IMR-90 (cell line): ENCODE measurements at regions of chr12 and their contacts with region 1.

Region 1: DNA sequence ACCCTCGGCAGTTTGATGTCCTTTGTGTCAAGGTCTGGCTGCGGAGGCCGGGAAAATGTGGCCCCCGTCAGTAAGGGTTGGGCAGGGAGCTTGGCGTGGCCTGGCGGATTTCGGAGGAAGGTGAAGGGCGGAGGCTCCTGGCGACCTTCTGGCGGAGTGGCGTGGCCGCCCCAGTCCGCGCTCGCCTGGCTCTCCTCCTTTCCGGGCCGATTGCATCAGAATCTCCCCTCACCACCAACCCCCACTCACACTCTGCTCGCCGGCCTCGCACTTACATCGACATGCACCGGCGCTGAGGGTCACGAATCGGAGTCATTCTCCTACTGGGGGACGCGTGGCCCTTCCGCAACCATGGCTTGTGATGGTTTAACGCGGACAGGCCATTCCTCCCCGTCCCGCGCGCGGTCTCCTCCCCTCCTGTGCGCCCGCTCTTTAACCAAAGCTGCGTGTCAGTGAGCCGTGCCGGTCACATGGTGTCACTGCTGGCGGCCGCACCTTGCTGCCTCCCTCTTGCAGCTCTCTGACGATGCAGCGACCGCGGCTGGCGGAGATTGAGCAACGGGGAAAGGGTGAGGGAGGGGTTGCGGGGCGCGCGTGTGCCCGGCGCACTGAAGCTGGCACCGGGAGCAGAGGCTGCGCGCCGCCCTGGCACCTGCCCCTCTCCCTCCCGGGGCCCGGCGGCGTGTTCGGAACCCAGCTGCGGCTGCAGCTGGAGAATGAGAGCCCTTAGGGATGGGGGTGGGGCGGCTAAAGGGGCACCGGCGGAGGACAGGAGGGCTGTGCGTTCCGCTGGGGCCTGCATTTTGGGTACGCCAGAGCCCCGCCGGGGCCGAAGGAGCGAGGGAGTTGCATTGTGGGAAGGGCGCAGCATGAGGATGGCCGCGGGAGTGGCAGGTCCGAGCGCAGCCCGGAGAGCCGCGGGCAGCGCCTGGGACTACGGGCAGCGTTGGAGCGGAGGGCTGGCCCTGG is at the start of gene SLC38A1:
- DNase-seq: peak; percentile 74
- ATAC-seq: peak; percentile 70
- H3K4me3 ChIP-seq: peak within 1 kb of the TSS; percentile 96
- H3K27ac ChIP-seq: peak within 1 kb of the TSS; percentile 91
- H3K4me1 ChIP-seq: peaks cover 15% of the 10 kb centered on the region
- H3K27me3 ChIP-seq: no peaks in the 10 kb centered on the region
- CTCF ChIP-seq: no peak
- POLR2A ChIP-seq: peak; percentile 63; the same call in 1 of the 2 replicates
- RAD21 ChIP-seq: no peak; the same call in 1 of the 2 replicates
- total RNA-seq, gene SLC38A1: 61.5 and 71.9 TPM in 2 replicates

Region 2: DNA sequence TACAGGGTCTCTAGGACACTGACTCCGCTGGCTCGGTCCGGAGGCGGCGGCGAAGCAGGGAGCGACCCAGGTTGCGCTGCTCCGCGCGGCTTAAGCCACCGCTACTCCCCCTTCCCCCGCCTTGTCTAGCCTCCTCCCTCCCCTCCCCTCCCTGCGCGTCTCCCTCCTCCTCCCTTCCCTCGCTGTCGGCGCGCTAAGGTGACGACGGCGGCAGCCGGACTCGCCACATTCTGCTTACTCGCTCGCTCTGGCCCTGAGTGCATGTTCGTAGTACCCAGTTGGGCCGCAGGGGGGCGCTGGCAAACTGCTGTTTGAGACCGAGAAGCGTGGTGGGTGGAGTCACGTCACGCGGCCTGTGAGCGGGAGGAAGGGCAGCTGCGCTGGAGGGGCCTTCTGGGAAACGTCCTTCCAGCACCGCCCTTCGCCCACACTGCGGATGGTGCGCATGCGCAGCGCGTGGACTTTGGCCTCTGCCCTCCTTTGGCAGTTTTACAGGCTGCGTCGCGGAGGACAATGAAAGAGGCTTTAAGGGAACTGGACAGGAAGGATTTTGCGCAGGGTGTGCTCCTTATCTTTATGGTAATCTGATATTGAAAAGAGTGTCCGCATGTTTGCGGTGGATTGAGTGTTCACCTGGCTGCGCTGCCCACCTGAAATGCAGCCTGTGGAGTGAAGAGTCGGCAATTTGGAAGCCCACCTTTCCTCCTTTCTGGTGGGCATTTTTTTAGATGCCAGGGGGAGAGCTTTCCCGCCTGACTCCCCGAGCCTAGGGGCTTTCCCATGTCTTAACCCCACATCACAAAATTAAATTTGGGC is 278.2 kb before region 1 on chr12 and contains the start of gene SCAF11:
- CTCF ChIA-PET with region 1: no interaction called
- POLR2A ChIA-PET with region 1: no interaction called
- dilution Hi-C with region 1: no loop called
- in situ Hi-C with region 1: no loop called
- intact Hi-C with region 1: loop called (anchors 5 kb)
- DNase-seq: peak; percentile 100
- ATAC-seq: peak; percentile 86
- H3K4me3 ChIP-seq: peak within 1 kb of the TSS; percentile 78
- H3K27ac ChIP-seq: peak within 1 kb of the TSS; percentile 87
- H3K4me1 ChIP-seq: peaks cover 3% of the 10 kb centered on the region; the same call in 1 of the 2 replicates
- H3K27me3 ChIP-seq: no peaks in the 10 kb centered on the region
- CTCF ChIP-seq: peak; percentile 99
- POLR2A ChIP-seq: peak; percentile 86
- RAD21 ChIP-seq: peak; percentile 84
- total RNA-seq, gene SCAF11: 70.4 and 90.3 TPM in 2 replicates

Region 3: DNA sequence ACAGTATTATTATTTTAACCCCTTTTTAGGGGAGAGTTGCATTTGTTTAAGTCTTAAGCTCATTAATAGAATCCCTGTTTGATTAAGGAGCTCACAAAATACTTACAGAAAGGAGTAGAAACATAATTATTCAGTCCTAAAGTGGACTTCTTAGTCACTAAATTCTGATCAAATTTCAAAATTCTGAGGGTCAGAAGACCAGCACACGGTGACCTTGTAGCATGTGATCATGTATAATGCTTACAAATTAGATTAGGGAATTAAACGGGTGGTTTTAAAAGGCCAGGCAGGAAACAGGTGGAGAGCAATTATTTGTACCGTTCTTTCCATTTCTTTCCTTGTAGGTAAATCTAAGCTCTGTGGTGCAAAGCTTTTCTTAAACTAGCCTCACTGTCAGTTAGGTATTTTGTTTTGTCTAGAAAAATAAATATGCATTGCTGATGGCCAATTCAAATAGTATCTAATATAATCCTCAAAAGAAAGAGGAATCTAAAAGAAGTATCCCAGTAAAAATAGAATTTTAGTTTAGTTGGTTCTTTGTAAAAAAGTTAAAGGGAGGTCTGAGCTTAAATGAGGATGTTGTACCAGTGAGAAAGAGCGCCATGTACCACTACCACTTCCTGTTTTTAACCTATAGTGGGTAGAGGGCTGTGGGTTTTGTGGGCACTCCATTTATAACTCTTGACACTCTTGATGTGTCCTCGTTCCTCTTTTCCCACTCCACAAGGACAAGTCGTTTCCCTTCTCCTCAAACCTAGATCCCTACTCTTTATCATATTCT is 51.1 kb before region 1 on chr12:
- CTCF ChIA-PET with region 1: no interaction called
- POLR2A ChIA-PET with region 1: no interaction called
- dilution Hi-C with region 1: no loop called
- in situ Hi-C with region 1: loop called (anchors 5 kb)
- intact Hi-C with region 1: loop called (anchors 5 kb)
- DNase-seq: no peak
- ATAC-seq: no peak
- H3K4me3 ChIP-seq: no peak overlapping the region
- H3K27ac ChIP-seq: no peak overlapping the region
- H3K4me1 ChIP-seq: peaks cover 10% of the 10 kb centered on the region
- H3K27me3 ChIP-seq: no peaks in the 10 kb centered on the region
- CTCF ChIP-seq: no peak
- POLR2A ChIP-seq: no peak
- RAD21 ChIP-seq: no peak

Region 4: GRCh38 chr12:46342562-46343033 is 73.7 kb after region 1 on chr12:
- CTCF ChIA-PET with region 1: no interaction called
- POLR2A ChIA-PET with region 1: no interaction called
- dilution Hi-C with region 1: no loop called
- in situ Hi-C with region 1: no loop called
- intact Hi-C with region 1: no loop called
- DNase-seq: peak; percentile 63
- ATAC-seq: peak; percentile 91
- H3K4me3 ChIP-seq: no peak overlapping the region
- H3K27ac ChIP-seq: no peak overlapping the region
- H3K4me1 ChIP-seq: peaks cover 3% of the 10 kb centered on the region; the same call in 1 of the 2 replicates
- H3K27me3 ChIP-seq: no peaks in the 10 kb centered on the region
- CTCF ChIP-seq: peak; percentile 53
- POLR2A ChIP-seq: no peak
- RAD21 ChIP-seq: peak; percentile 63

Region 5: GRCh38 chr12:46492471-46493351 is 223.8 kb after region 1 on chr12:
- CTCF ChIA-PET with region 1: no interaction called
- POLR2A ChIA-PET with region 1: no interaction called
- dilution Hi-C with region 1: no loop called
- in situ Hi-C with region 1: no loop called
- intact Hi-C with region 1: loop called (anchors 10 kb)
- DNase-seq: peak; percentile 97
- ATAC-seq: peak; percentile 65
- H3K4me3 ChIP-seq: no peak overlapping the region
- H3K27ac ChIP-seq: peak overlapping the region; percentile 93; the same call in 1 of the 2 replicates
- H3K4me1 ChIP-seq: peaks cover 27% of the 10 kb centered on the region
- H3K27me3 ChIP-seq: no peaks in the 10 kb centered on the region
- CTCF ChIP-seq: no peak
- POLR2A ChIP-seq: no peak
- RAD21 ChIP-seq: no peak

Region 6: DNA sequence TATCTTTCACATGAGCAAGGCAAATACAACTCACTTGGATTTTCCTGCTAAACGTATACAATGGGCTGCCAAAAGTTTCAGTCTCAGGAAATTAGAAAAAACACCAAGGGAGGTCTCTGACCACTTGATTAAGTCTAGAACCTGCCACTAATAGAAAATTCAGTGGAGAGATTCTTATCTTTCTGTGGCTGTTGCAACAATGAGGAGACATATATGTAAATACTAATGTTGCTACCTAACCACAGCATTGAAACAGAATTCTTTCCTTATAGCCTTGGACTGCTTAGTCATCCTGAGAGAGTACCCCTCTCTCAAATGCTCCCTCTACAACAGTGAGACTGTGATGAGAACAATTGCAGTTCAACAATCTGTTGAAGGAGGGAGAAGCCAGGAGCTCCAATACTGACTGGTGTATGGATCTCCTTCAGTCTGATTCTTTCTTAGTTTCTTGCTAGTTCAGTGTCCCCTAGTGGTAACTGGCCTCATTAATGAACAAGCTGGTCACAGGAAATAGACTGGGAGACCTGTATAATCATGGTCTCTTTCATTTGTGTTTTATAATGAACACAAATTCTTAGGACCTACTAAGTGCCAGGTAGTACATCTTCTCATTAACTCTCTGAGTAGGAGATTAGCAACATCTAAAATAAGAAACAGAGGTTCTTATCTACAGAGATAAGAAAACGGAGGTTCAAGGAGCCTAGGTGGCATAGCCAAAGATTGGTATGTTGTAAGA is 392.4 kb after region 1 on chr12:
- CTCF ChIA-PET with region 1: no interaction called
- POLR2A ChIA-PET with region 1: no interaction called
- dilution Hi-C with region 1: no loop called
- in situ Hi-C with region 1: no loop called
- intact Hi-C with region 1: loop called (anchors 5 kb)
- DNase-seq: peak; percentile 95
- ATAC-seq: peak; percentile 76
- H3K4me3 ChIP-seq: peak overlapping the region; percentile 14; the same call in 1 of the 2 replicates
- H3K27ac ChIP-seq: peak overlapping the region; percentile 93
- H3K4me1 ChIP-seq: peaks cover 29% of the 10 kb centered on the region
- H3K27me3 ChIP-seq: no peaks in the 10 kb centered on the region
- CTCF ChIP-seq: peak; percentile 87
- POLR2A ChIP-seq: peak; percentile 32; the same call in 1 of the 2 replicates
- RAD21 ChIP-seq: peak; percentile 84